ENCODE measurements at regions of chr21 and their contacts with region 1.

Region 1: DNA sequence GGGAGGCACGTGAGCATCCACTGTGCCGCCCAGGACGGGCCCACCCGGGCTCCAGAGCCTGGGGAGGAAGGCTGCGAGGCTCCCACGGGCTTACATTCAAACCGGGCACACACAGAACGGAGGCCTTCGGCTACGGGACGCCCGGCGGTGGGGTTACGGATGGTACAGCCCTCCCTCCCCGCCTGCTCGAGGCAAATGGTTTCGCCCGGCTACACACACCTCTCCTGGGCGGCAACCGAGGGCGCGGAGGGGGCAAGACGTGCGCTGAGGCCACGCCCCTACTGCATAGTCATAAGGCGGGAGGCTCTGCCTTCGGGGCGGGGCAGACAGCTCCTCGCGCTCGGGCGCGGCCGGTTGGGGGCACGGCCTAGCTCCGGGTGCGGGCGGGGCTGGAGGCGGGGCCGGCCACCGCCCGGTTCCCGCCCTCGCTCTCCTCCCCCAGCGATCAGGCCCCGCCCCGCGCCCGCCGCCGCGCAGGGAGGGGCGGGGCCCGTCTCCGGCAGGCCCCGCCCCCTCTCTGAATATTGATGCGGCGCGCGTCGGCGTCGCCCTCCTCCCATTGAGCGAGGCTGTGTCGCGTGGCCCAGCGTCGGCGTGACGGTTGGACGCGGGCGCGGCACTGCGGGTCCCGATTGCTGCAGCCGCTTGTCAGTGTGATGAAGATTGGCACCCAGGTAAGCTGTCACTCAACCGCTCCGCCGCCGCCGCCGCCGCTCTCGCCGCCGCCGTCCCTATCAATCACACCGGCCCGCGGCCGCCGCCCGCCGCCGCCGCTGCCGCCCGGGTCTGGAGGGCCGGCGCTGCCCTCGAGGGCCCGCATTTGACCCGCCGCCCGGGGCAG is at the start of gene PKNOX1:
- DNase-seq: peak; percentile 97 to 100 (median 99)
- ATAC-seq: peak; percentile 85 to 87 (median 86)
- H3K4me3 ChIP-seq: peak within 1 kb of the TSS; percentile 76 to 77
- H3K4me3 Mint-ChIP-seq: peak within 1 kb of the TSS; percentile 87 to 88 (median 88)
- H3K27ac ChIP-seq: peak within 1 kb of the TSS; percentile 92
- H3K27ac Mint-ChIP-seq: peak within 1 kb of the TSS; percentile 89 to 92
- H3K4me1 ChIP-seq: peaks cover 13 to 18% of the 10 kb centered on the region in 2 experiments
- H3K4me1 Mint-ChIP-seq: peaks cover 29 to 31% (median 30%) of the 10 kb centered on the region in 3 donors
- H3K27me3 ChIP-seq: no peaks in the 10 kb centered on the region
- H3K27me3 Mint-ChIP-seq: no peaks in the 10 kb centered on the region
- total RNA-seq, gene PKNOX1: 14.4 to 21.7 (median 18.6) TPM

Region 2: GRCh38 chr21:42317341-42317741 is 656.9 kb before region 1 on chr21:
- CTCF ChIA-PET with region 1: no interaction called
- POLR2A ChIA-PET with region 1: interaction called in 1 of 2 experiments, 13 read pairs
- DNase-seq: no peak
- ATAC-seq: no peak
- H3K4me3 ChIP-seq: no peak overlapping the region
- H3K4me3 Mint-ChIP-seq: no peak overlapping the region
- H3K27ac ChIP-seq: no peak overlapping the region
- H3K27ac Mint-ChIP-seq: no peak overlapping the region
- H3K4me1 ChIP-seq: peaks cover 0 to 9% of the 10 kb centered on the region in 2 experiments
- H3K4me1 Mint-ChIP-seq: peaks cover 5 to 10% (median 8%) of the 10 kb centered on the region in 3 donors
- H3K27me3 ChIP-seq: peaks cover 0 to 11% of the 10 kb centered on the region in 2 experiments
- H3K27me3 Mint-ChIP-seq: peaks cover 4 to 5% of the 10 kb centered on the region in 2 donors

Region 3: DNA sequence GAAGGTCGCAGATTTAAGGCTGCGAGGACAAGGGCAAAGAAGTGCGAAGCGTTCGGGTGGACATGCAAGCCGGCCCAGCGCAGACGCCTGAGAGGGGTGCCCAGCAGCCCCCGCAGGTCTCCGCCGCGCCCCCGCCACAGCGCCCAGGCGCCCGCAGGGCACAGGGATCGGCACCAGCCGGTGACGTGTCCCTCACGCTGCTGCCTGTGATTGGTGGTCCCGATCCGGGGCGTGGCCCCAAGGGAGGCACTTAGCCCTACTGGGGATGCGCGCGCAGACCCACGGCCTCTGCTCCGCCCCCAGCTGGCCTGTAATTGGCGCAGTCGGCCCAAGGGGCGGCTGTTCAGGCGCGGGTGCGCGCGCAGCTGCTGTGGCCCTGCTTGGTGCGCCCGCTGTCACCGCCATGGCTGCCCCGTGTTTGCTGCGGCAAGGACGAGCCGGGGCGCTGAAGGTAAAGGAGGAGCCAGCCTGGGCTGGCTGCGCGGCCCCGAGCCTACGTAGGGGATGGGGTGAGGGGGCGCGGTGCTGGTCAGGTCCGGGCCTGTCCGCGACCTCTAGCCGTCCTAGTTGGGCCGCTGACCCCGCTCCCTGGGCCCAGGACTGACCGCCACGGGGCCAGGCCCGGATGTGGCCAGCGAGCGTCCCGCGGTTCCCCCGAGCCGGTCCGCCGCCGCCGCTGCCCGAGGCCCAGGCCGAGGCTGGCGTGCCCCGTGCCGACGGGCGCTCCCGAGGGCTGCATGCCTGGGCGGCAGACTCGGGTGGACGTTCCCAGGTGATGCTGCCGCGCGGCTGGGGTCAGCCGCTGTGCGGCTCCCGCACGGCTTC is 81.1 kb before region 1 on chr21 and contains the start of gene NDUFV3:
- CTCF ChIA-PET with region 1: no interaction called
- POLR2A ChIA-PET with region 1: interaction called in 1 of 2 experiments, 10 read pairs
- DNase-seq: peak; percentile 97 to 100 (median 100)
- ATAC-seq: peak; percentile 93 to 97 (median 95)
- H3K4me3 ChIP-seq: peak within 1 kb of the TSS; percentile 80 to 85
- H3K4me3 Mint-ChIP-seq: peak within 1 kb of the TSS; percentile 82 to 94 (median 83)
- H3K27ac ChIP-seq: peak within 1 kb of the TSS; percentile 93
- H3K27ac Mint-ChIP-seq: peak within 1 kb of the TSS; percentile 87 to 96
- H3K4me1 ChIP-seq: peaks cover 3 to 20% of the 10 kb centered on the region in 2 experiments
- H3K4me1 Mint-ChIP-seq: peaks cover 15 to 20% (median 18%) of the 10 kb centered on the region in 3 donors
- H3K27me3 ChIP-seq: no peaks in the 10 kb centered on the region
- H3K27me3 Mint-ChIP-seq: no peaks in the 10 kb centered on the region
- total RNA-seq, gene NDUFV3: 21.3 to 32.0 (median 28.5) TPM

Measured in T-cell (primary cell).